Activated B cell treated with CpG ODN at 0.5 μM for 24 hours (primary cell): ENCODE measurements at regions of chr12 and their contacts with region 1.

Region 1: DNA sequence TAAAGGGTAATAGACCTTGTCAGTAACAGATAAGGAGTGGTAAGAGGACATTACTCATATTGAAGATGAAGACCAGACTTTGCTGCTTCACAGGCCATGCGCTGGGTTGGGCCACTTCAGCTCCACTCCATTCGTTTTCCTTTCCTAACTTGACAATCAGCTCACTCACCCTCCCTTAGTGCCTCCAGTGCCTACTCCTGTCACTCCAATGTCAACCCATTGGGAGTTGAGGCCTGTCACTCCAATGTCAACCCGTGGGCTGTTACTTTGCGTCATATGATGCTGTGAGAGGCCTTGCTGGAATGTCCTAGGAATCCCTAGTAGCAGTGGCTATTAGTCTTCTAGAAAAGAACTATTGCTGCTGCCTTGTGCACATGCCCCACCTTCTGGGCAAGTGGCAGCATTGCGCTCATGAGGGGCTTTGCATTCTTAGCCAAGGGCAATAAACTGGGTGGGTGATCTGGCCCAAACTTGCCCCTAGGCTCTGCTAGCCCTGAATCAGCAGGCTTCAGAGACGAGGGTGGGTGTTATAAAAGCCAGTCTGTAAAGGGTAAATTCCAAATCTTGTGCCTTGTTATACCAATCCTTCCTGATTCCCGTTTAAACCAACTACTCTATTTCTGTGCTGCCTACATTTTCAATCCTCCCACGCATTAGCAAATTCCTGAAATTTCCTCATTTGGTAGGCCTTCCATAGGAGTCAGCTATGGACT is 36.1 kb downstream of the BAZ2A start:
- DNase-seq: peak; percentile 33
- ATAC-seq: peak; percentile 83
- H3K4me3 Mint-ChIP-seq: no peak overlapping the region
- H3K27ac Mint-ChIP-seq: no peak overlapping the region
- H3K4me1 Mint-ChIP-seq: peaks cover 2% of the 10 kb centered on the region
- H3K27me3 Mint-ChIP-seq: no peaks in the 10 kb centered on the region
- CTCF ChIP-seq: no peak

Region 2: DNA sequence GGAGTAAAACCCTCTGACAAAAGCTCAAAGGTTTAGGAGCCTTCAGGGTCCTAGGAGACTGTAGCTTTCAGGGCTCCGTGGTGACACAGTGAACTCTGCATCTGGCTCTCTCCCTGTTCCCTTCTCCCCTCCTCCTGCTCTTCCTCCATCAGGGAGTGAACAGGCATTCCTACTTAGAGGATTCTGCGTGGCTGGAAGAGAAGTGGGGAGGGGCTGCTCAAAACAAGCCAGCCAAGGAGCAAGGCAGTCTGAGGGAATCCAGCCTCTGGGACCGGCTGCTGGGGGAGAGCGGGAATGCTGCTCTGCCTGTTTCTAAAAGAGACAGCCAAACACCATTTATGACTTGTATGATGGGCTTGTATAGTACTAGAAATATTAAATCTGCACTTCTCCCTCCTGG is 22.9 kb before region 1 on chr12:
- CTCF ChIA-PET with region 1: interaction called, 4 read pairs
- POLR2A ChIA-PET with region 1: no interaction called
- intact Hi-C with region 1: loop called (anchors 1 kb)
- DNase-seq: no peak
- ATAC-seq: no peak
- H3K4me3 Mint-ChIP-seq: no peak overlapping the region
- H3K27ac Mint-ChIP-seq: no peak overlapping the region
- H3K4me1 Mint-ChIP-seq: peaks cover 3% of the 10 kb centered on the region
- H3K27me3 Mint-ChIP-seq: no peaks in the 10 kb centered on the region
- CTCF ChIP-seq: no peak

Region 3: GRCh38 chr12:56630160-56630632 is 36.1 kb after region 1 on chr12 and contains the start of gene BAZ2A:
- CTCF ChIA-PET with region 1: interaction called, 25 read pairs
- POLR2A ChIA-PET with region 1: no interaction called
- intact Hi-C with region 1: loop called (anchors 5 kb)
- DNase-seq: peak; percentile 74
- ATAC-seq: peak; percentile 62
- H3K4me3 Mint-ChIP-seq: peak within 1 kb of the TSS; percentile 96
- H3K27ac Mint-ChIP-seq: peak within 1 kb of the TSS; percentile 88
- H3K4me1 Mint-ChIP-seq: peaks cover 80% of the 10 kb centered on the region
- H3K27me3 Mint-ChIP-seq: no peaks in the 10 kb centered on the region
- CTCF ChIP-seq: no peak
- total RNA-seq, gene BAZ2A: 153 and 192 TPM in 2 replicates

Region 4: DNA sequence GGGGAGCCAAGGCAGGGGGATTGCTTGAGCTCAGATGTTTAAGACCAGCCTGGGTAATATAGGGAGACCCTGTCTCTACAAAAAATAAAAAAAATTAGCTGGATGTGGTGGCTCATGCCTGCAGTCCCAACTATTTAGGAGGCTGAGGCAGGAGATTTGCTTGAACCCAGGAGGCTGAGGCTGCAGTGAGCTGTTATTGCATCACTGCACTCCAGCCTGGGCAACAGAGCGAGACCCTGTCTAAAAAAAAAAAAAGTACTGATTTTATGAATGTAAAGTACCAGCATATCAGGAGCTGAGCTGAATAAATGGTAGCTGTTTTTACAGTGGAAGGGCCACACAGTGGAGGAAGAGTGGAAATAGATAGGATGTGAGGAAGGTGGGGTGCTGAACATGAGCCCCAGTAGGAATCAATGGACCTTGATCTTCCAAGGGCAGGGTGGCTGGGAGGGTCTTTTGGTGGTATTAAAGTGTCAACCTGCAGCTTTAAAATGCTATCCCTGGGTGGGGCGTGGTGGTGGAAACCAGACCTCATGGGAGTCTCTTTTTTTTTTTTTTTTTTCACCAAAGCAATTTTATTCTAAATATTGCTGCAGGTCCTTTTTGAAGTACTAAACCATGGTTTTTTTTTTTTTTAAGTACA is 1349.5 kb after region 1 on chr12:
- CTCF ChIA-PET with region 1: no interaction called
- POLR2A ChIA-PET with region 1: no interaction called
- intact Hi-C with region 1: no loop called
- DNase-seq: no peak
- ATAC-seq: no peak
- H3K4me3 Mint-ChIP-seq: no peak overlapping the region
- H3K27ac Mint-ChIP-seq: peak overlapping the region; percentile 18
- H3K4me1 Mint-ChIP-seq: peaks cover 20% of the 10 kb centered on the region
- H3K27me3 Mint-ChIP-seq: no peaks in the 10 kb centered on the region
- CTCF ChIP-seq: no peak